WTC11 (cell line): ENCODE measurements at regions of chr4 and their contacts with region 1.

Region 1: DNA sequence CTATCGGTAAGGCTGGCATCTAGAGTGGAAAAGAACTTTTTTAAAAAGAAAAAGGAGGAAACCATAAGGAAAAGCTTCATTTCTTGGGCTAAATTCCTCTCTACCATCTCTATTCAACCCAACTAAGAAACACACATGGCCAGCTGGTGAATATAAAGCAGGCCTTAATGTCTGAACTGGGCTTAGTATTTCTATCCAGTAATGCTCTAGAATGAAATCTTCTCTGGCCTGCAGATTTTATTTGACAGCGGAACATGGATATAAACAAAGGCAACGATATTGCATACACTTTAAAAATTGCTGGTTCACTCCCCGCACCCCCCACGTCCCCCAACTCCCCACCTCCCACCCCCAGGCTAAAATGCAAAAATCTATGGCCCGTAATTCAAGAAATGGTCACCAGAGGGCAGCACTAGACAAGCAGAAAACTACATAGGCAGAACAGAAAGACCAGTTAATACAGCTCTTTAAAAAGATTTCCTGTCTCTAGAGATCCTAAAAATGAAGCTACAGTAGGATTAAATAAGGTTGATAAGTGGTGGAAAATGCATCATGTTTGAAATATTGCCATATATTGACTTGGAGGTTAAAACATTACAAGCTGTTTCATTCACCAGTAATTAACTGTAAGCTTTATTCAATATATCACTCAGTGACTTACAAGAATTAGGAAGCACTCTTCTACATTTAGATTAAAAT is 155.2 kb upstream of the GALNT7 start:
- DNase-seq: peak; percentile 66
- ATAC-seq: peak; percentile 23
- H3K4me3 Mint-ChIP-seq: no peak overlapping the region
- H3K27ac Mint-ChIP-seq: no peak overlapping the region
- H3K4me1 Mint-ChIP-seq: peaks cover 39% of the 10 kb centered on the region
- H3K27me3 Mint-ChIP-seq: no peaks in the 10 kb centered on the region
- CTCF ChIP-seq: peak; percentile 77

Region 2: GRCh38 chr4:173025131-173025530 is 11.8 kb after region 1 on chr4:
- CTCF ChIA-PET with region 1: interaction called, 26 read pairs
- POLR2A ChIA-PET with region 1: no interaction called
- DNase-seq: peak; percentile 55
- ATAC-seq: peak; percentile 88
- H3K4me3 Mint-ChIP-seq: no peak overlapping the region
- H3K27ac Mint-ChIP-seq: no peak overlapping the region
- H3K4me1 Mint-ChIP-seq: peaks cover 47% of the 10 kb centered on the region
- H3K27me3 Mint-ChIP-seq: no peaks in the 10 kb centered on the region
- CTCF ChIP-seq: peak; percentile 67

Region 3: DNA sequence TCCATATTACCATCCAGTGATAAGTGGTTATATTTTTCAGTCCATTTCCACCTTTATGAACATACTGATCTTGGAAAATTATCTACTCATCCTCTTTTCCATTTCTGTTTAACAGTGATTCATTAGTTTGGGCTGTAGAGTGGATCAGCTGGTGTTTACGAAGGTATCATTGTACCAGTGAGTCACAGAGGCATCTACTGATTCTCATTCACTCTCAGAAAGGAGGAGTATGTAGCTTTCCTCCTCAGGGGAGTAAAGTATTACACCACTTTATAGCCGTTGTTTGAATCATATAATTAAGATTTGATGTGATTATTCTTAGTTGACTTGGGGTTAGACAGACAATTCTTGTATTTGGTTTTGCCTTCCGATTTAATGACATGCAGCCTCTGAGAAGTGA is 229.9 kb after region 1 on chr4:
- CTCF ChIA-PET with region 1: interaction called, 15 read pairs
- POLR2A ChIA-PET with region 1: no interaction called
- DNase-seq: no peak
- ATAC-seq: no peak
- H3K4me3 Mint-ChIP-seq: peak overlapping the region; percentile 38
- H3K27ac Mint-ChIP-seq: peak overlapping the region; percentile 82
- H3K4me1 Mint-ChIP-seq: peaks cover 91% of the 10 kb centered on the region
- H3K27me3 Mint-ChIP-seq: no peaks in the 10 kb centered on the region
- CTCF ChIP-seq: no peak

Region 4: DNA sequence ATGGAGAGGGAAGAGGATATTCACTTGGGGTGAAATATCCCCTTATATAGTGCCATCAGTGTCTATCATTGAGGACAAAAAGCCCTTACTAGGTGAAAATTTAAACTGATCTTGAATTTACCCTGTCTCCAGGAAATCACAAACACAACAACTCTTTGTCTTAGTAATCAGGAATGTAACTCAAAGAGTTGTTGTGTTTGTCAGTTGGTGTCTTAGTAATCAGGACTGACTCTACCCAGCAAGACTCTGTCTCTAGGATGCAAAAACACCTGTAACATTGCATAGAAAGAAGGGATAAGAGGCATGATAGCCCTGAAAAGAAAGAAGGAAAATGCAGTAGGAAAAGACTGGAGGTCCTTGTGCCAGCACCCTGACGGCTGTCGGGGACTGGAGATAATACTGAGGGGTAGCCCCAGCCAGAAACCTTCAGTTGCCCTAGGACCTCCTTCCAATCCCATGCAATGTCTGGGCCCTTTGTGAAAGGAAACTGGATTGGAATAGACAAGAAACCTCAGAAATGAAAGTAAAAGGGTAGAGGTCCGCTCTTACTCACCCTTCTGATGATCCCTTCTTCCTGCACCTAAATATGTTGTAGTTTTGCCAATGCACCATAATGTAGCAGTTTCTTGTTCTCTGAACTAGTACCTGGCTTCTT is 275.4 kb after region 1 on chr4:
- CTCF ChIA-PET with region 1: interaction called, 11 read pairs
- POLR2A ChIA-PET with region 1: no interaction called
- DNase-seq: no peak
- ATAC-seq: no peak
- H3K4me3 Mint-ChIP-seq: no peak overlapping the region
- H3K27ac Mint-ChIP-seq: no peak overlapping the region
- H3K4me1 Mint-ChIP-seq: peaks cover 2% of the 10 kb centered on the region; the same call in 1 of the 2 replicates
- H3K27me3 Mint-ChIP-seq: no peaks in the 10 kb centered on the region; the same call in 1 of the 2 replicates
- CTCF ChIP-seq: no peak

Region 5: DNA sequence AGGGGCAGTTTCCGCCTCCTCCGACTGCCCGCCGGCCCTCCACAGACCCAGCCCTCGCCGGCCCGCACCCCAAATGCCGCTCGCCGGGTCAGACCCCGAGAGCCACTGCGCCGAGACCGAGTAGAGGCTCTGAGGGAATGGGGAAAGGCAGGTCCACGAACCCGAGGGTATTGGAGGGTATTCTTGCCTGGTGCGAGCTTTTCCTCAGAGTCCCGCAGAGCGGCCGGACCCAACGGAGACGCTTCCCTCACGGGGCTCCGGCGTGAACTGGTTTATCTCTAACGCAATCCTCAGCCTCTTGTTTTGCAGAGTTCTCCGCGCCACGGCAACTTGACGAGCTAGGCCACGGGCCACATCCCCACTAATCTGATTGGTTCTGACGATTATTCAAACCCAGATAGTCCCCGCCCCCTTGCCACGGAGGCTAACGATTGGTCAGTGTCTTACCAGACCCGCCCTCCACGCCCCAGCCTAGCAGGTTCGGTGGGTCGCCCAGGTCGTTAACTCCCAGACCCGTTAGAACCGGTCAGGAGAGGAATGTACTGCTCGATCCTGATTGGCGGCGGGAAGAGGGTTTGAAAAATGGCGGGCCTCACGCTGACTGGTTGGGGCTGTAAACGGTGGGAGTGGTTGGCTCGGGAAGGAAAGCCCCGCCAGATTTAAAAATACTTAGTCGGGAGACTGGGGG is 320.8 kb after region 1 on chr4 and contains the start of gene HMGB2:
- CTCF ChIA-PET with region 1: interaction called, 23 read pairs
- POLR2A ChIA-PET with region 1: interaction called, 15 read pairs
- DNase-seq: peak; percentile 100
- ATAC-seq: peak; percentile 87
- H3K4me3 Mint-ChIP-seq: peak within 1 kb of the TSS; percentile 97
- H3K27ac Mint-ChIP-seq: peak within 1 kb of the TSS; percentile 100
- H3K4me1 Mint-ChIP-seq: peaks cover 36% of the 10 kb centered on the region
- H3K27me3 Mint-ChIP-seq: no peaks in the 10 kb centered on the region
- CTCF ChIP-seq: no peak
- total RNA-seq, gene HMGB2: 279 to 294 TPM (median 288 TPM) in 3 replicates

Region 6: GRCh38 chr4:173494013-173494970 is 480.9 kb after region 1 on chr4:
- CTCF ChIA-PET with region 1: interaction called, 17 read pairs
- POLR2A ChIA-PET with region 1: no interaction called
- DNase-seq: peak; percentile 78
- ATAC-seq: peak; percentile 95
- H3K4me3 Mint-ChIP-seq: peak overlapping the region; percentile 75
- H3K27ac Mint-ChIP-seq: no peak overlapping the region
- H3K4me1 Mint-ChIP-seq: peaks cover 34% of the 10 kb centered on the region
- H3K27me3 Mint-ChIP-seq: peaks cover 81% of the 10 kb centered on the region
- CTCF ChIP-seq: peak; percentile 74